Psoas muscle (tissue), 8 donors: ENCODE measurements at regions of chr16 and their contacts with region 1.

Region 1: DNA sequence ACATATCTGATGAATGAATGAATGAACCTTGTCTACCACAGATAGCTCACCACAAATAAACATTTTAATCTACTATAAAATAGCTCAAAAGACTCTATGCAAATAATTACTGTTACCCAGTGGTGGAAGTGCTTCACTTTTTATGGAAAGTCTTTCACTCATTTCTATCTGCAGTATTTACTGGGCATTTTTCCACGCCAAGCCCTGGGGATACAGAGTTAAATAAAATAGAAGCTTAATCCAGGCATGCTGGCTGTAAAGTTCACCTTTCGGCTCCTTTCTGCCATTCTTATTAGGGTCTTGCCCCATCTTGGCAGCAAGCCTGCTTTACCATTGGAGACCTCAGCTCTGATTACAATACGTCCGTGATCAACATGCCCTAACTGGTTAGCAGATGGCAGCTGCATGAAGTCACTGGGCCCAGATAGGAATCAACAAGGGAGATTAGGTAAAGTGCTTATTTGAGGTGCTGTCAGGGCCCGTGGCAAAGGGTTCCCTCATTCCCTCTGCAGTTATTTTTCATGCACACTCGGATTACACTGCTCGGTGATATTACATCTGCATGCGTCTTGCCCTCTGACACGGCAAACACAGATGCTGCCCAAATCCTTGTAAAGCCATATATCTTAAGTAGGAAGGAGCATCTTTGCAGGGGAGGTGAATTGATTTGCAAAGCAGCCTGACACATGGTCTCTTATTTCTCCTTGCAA is 648.9 kb downstream of the WWOX start:
- DNase-seq: no peak
- ATAC-seq: peak; percentile 86 to 92 (median 92)
- H3K4me3 ChIP-seq: no peak overlapping the region
- H3K27ac ChIP-seq: peak overlapping the region; percentile 85
- H3K4me1 ChIP-seq: peaks cover 17% of the 10 kb centered on the region
- H3K27me3 ChIP-seq: no peaks in the 10 kb centered on the region
- CTCF ChIP-seq: no peak

Region 2: DNA sequence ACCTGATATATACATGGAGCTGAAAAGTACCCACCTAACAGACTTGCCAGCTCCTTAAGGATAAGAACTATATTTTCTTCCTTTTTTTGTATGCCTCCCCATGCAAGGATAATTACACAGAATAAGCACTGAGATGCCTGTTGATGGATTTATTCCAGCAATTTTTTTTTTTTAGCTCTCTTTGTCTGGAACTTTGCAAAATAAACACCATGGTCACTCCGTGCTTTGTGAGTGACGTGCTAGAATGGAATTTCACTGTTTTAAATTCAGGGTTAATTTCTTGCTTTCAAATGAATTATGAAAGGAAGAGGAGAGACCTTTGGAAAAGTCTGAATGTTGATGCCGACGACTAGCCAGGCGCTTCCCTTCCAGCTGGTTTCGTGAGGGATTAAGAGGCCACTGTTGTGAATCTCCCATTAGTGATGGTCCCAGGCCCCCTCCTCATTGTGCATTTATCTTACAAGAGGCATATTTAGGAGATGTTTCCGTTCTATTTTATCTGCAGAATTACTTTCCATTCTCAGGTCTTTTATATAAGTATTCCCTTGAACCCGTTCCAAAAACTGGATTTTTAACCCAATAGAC is 119.8 kb before region 1 on chr16:
- intact Hi-C with region 1: loop called in 1 of 2 experiments (anchors 2 kb)
- DNase-seq: no peak
- ATAC-seq: no peak
- H3K4me3 ChIP-seq: no peak overlapping the region
- H3K27ac ChIP-seq: peak overlapping the region; percentile 82
- H3K4me1 ChIP-seq: peaks cover 22% of the 10 kb centered on the region
- H3K27me3 ChIP-seq: no peaks in the 10 kb centered on the region
- CTCF ChIP-seq: no peak

Region 3: GRCh38 chr16:78684040-78684611 is 64.2 kb before region 1 on chr16:
- intact Hi-C with region 1: loop called in 1 of 2 experiments (anchors 1 kb)
- DNase-seq: peak; percentile 84 to 91
- ATAC-seq: peak; percentile 94 to 97 (median 96)
- H3K4me3 ChIP-seq: no peak overlapping the region
- H3K27ac ChIP-seq: peak overlapping the region; percentile 92
- H3K4me1 ChIP-seq: peaks cover 15% of the 10 kb centered on the region
- H3K27me3 ChIP-seq: no peaks in the 10 kb centered on the region
- CTCF ChIP-seq: no peak

Region 4: GRCh38 chr16:78805556-78805955 is 57.2 kb after region 1 on chr16:
- intact Hi-C with region 1: no loop called
- DNase-seq: no peak
- ATAC-seq: no peak
- H3K4me3 ChIP-seq: no peak overlapping the region
- H3K27ac ChIP-seq: no peak overlapping the region
- H3K4me1 ChIP-seq: no peaks in the 10 kb centered on the region
- H3K27me3 ChIP-seq: no peaks in the 10 kb centered on the region
- CTCF ChIP-seq: no peak